Heart left ventricle (tissue), 16 donors: ENCODE measurements at regions of chr6 and their contacts with region 1.

Region 1: DNA sequence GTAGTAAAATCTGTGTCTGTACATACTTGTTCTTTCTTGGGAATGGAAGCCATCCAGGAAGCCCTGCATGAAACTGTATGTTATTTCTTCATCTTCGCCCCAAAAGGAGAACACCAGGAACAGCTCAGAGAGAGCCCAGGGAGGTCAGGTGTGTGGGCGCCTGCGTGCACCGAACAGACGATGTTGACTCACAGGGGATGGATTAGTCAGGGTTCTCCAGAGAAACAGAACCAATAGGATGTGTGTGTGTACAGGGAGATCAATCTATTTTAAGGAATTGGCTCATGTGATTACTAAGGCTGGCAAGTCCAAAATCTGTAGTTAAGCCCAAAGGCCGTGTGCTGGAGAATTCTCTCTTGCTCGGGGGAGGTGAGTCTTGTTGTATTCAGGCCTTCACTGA is 45.7 kb downstream of the RNASET2 start:
- DNase-seq: no peak
- ATAC-seq: no peak
- H3K4me3 ChIP-seq: no peak overlapping the region
- H3K27ac ChIP-seq: no peak overlapping the region
- H3K4me1 ChIP-seq: peaks cover 0 to 13% (median 0%) of the 10 kb centered on the region in 12 donors
- H3K27me3 ChIP-seq: no peaks in the 10 kb centered on the region
- CTCF ChIP-seq: no peak
- POLR2A ChIP-seq: no peak

Region 2: DNA sequence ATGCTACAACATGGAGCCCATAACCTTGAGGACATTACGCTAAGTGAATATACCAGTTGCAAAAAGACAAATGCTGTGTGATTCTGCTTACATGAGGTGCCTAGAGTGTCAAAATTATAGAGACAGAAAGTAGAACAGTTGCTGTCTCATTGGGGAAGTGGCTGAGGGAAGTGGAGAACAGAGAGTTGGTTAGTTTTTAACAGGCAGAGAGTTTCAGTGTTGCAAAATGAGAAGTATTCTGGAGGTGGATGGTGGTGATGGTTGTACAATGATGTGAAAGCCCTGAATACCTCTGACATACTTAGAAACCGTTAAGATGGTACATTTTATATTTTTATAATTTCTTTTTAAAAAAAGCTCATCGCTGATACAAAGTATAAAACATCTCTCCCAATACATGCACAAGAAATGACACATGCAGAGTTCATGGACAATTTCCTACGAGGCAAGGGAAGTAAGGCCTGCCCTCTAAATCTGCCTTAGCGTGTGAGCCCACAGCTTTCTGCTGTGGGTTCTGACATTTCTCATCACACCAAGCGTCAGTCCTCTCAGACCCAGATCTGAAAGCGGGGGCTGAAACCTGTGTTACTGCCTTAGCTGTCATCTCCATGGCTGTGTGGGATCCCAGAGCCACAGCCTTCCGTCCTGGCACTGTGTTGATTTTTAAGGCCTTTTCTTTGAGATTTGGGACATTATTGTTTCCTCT is 80.3 kb before region 1 on chr6:
- intact Hi-C with region 1: loop called in 1 of 10 experiments (anchors 5 kb)
- DNase-seq: no peak
- ATAC-seq: no peak
- H3K4me3 ChIP-seq: no peak overlapping the region
- H3K27ac ChIP-seq: no peak overlapping the region
- H3K4me1 ChIP-seq: peaks cover 0 to 3% (median 0%) of the 10 kb centered on the region in 12 donors
- H3K27me3 ChIP-seq: no peaks in the 10 kb centered on the region
- CTCF ChIP-seq: no peak
- POLR2A ChIP-seq: no peak